IMR-90 (cell line): ENCODE measurements at regions of chr11 and their contacts with region 1.

Region 1: DNA sequence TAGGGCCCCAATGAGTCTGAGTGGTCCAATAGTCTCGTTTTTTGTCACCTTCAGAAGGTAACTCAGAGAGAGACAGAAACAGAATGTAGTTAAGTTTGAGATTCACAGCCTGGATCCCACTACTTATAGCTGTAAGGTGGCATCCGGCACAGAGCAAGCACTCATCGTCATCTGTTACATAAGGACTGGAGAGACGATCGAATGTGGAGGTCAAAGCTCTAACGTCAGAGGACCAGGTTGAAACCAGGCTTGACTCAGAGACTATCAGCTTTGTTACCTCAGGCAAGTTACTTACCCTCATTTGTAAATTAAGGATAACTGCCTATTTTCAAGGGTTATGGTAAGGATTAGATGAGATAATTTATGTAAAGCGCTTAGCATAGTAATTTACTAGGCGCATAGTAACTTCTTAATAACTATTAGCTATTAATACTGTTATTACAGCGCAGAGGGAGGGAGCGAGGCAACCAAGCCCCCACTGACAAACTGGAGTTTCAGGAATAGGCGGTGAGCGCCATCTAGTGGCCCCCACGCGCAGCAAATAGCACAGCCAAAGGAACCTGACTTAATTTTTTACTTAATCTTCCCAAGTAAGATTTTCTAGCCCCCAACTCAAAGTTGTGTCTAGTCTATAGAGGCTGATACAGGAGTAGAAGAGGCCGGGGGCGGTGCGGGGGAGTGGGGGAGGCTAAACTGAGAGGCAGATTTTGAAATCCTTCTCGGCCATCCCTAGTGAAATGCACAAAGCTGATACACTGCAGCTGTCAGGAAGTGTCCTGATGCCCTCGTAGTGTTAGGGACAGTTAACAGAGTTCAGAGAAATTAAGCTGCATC is 29.0 kb upstream of the API5 start:
- DNase-seq: peak; percentile 16
- ATAC-seq: peak; percentile 66
- H3K4me3 ChIP-seq: no peak overlapping the region
- H3K27ac ChIP-seq: no peak overlapping the region
- H3K4me1 ChIP-seq: no peaks in the 10 kb centered on the region
- H3K27me3 ChIP-seq: no peaks in the 10 kb centered on the region
- CTCF ChIP-seq: peak; percentile 82
- POLR2A ChIP-seq: no peak
- RAD21 ChIP-seq: peak; percentile 73

Region 2: DNA sequence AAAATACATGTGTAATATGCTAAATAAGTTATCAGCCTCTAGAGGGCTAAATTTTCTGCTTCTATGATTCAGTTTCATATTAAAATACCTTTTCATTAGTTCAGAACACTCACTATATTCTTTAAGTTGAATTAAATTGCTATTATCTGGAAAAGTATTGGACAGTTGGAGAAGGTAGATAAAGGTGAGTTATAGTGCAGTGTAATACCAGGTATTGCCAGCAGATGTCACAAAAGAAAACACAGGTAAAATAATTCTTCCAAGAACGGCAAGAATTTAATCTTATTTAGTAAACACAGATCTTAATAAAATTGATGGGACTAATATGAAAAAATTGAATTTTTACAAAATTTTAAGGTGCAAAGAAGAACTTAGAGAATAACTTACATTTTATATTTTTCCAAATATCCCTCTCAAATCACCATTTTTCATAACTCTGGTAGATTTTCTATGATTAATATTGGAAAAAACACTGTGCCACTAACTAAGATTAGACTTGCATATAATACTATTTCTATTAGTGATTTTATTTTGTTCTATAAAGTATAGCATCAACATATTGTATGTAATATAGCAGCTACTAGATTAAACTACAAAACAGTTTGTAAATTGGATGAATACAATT is 1821.7 kb before region 1 on chr11:
- CTCF ChIA-PET with region 1: no interaction called
- POLR2A ChIA-PET with region 1: no interaction called
- dilution Hi-C with region 1: no loop called
- in situ Hi-C with region 1: loop called (anchors 25 kb)
- intact Hi-C with region 1: loop called (anchors 2 kb)
- DNase-seq: no peak
- ATAC-seq: no peak
- H3K4me3 ChIP-seq: no peak overlapping the region
- H3K27ac ChIP-seq: no peak overlapping the region
- H3K4me1 ChIP-seq: no peaks in the 10 kb centered on the region
- H3K27me3 ChIP-seq: no peaks in the 10 kb centered on the region
- CTCF ChIP-seq: peak; percentile 37
- POLR2A ChIP-seq: no peak
- RAD21 ChIP-seq: no peak

Region 3: GRCh38 chr11:42770444-42771065 is 512.3 kb before region 1 on chr11:
- CTCF ChIA-PET with region 1: no interaction called
- POLR2A ChIA-PET with region 1: no interaction called
- dilution Hi-C with region 1: no loop called
- in situ Hi-C with region 1: no loop called
- intact Hi-C with region 1: loop called (anchors 5 kb)
- DNase-seq: no peak
- ATAC-seq: no peak
- H3K4me3 ChIP-seq: no peak overlapping the region
- H3K27ac ChIP-seq: no peak overlapping the region
- H3K4me1 ChIP-seq: no peaks in the 10 kb centered on the region
- H3K27me3 ChIP-seq: no peaks in the 10 kb centered on the region
- CTCF ChIP-seq: peak; percentile 51
- POLR2A ChIP-seq: no peak
- RAD21 ChIP-seq: 0 out of 2 replicates have a peak, but pooled peaks have one; percentile 18

Region 4: DNA sequence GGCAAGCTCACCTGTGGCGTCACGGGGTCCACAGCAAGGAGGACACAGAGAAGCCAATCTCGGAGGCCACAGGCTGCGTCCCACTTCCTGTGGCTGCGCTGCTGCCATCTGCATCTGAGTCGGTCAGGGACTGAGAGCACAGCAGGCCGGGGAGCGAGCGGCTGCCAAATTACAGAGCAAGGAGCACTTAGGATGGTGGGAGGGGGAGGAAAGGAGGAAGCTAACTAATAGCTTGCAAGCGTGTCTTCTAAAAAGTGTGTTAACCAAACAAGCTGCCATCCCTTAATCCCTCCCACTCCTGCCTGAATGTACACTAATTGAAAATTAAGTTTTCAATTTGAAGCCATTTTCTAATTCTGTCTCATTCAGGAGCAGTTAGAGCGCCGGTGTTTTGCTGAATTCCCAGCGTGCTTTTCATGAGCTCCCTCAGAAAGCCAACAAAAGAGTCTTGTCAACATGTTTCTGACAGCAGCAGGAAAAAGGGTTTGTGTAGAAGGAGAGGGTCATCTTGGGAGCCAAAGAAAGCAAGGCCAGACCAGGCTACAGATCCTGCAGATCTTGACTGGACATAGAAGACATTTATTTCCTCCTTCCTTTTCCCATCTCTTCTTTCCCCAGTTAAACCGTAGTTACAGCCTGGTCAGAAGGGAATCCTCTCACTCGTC is 13.4 kb before region 1 on chr11:
- CTCF ChIA-PET with region 1: interaction called, 13 read pairs
- POLR2A ChIA-PET with region 1: no interaction called
- dilution Hi-C with region 1: no loop called
- in situ Hi-C with region 1: no loop called
- intact Hi-C with region 1: no loop called
- DNase-seq: no peak
- ATAC-seq: no peak
- H3K4me3 ChIP-seq: no peak overlapping the region
- H3K27ac ChIP-seq: no peak overlapping the region
- H3K4me1 ChIP-seq: no peaks in the 10 kb centered on the region
- H3K27me3 ChIP-seq: no peaks in the 10 kb centered on the region
- CTCF ChIP-seq: no peak
- POLR2A ChIP-seq: no peak
- RAD21 ChIP-seq: no peak

Region 5: DNA sequence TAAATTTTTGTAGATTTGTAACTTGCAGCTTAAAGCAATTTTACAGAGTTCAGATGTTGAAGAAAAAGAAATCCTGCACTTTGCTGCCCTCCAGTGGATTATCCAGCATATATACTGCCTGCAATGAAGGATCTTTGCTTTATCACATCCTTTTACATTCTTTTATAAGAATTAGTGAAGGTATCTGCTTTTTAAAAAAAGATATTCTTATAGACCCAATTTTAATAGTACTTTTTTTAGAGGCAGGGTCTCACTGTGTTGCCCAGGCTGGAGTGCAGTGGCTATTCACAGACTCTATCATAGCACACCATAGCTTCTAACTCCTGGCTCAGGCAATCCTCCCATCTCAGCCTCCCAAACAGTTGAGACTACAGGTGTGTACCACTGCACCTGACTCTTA is 136.6 kb after region 1 on chr11:
- CTCF ChIA-PET with region 1: interaction called, 4 read pairs
- POLR2A ChIA-PET with region 1: no interaction called
- dilution Hi-C with region 1: no loop called
- in situ Hi-C with region 1: no loop called
- intact Hi-C with region 1: loop called (anchors 1 kb)
- DNase-seq: peak; percentile 53
- ATAC-seq: peak; percentile 83
- H3K4me3 ChIP-seq: no peak overlapping the region
- H3K27ac ChIP-seq: no peak overlapping the region
- H3K4me1 ChIP-seq: 0 out of 2 replicates have a peak, but pooled peaks cover 2% of the 10 kb centered on the region
- H3K27me3 ChIP-seq: no peaks in the 10 kb centered on the region
- CTCF ChIP-seq: peak; percentile 59
- POLR2A ChIP-seq: no peak
- RAD21 ChIP-seq: peak; percentile 66